ENCODE measurements at regions of chr3 and their contacts with region 1.

Region 1: GRCh38 chr3:114375608-114376421 is 82.0 kb downstream of the TIGIT start:
- DNase-seq: peak; percentile 80
- H3K4me3 ChIP-seq: no peak overlapping the region
- H3K27me3 ChIP-seq: no peaks in the 10 kb centered on the region
- CTCF ChIP-seq: no peak

Region 2: DNA sequence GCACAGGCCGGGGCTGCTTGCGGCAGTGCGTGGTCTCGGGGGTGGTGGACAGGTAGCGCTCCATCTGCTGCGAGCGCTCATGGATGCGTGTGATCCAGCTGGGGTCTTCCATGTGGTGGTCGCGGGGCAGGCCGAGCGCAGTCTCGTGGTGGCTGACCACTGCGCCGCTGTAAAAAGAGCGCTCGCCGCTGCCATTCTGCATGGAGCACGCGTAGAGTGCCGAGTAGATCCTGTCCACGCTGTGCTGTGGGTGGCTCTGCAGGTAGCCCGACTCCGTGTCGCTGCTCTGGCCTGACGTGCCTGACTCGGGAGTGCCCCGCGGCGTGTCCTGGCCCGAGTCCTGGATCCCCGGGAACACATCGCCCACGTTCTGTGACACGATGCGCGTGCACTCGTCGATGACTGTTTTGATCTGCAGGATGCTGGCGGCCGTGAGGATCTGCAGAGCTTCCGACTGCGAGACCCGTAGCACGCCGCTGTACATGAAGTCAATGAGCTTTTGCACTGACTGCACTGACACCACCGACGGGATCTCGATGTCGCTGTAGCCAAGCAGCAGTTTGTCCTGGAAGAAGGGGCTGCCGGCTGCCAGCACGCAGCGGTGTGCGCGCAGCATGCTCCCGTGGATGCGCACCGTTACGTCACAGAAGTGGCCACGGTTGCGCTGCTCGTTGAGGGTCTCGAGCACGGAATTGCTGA is 24.5 kb before region 1 on chr3:
- CTCF ChIA-PET with region 1: no interaction called
- POLR2A ChIA-PET with region 1: no interaction called
- DNase-seq: no peak
- H3K4me3 ChIP-seq: no peak overlapping the region
- H3K27me3 ChIP-seq: no peaks in the 10 kb centered on the region
- CTCF ChIP-seq: no peak

Region 3: DNA sequence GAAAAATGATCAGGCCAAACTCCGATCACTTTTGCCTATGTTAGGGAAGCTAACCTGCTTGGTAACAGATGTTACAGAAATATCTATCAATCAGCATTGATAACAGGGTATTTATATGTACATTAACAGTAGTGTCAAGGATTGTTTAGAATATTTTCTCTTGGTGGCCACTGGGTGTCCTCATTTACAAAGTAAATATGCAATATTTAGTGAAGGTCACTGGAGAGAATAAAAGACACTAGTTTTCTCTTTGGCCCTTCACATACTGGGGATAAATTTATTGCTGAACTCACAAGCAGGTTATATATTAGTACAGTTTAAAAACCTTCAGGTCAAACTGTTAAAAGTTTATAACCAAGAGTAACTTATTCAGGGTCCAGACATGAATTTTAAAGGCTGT is 13.0 kb before region 1 on chr3:
- CTCF ChIA-PET with region 1: interaction called, 12 read pairs
- POLR2A ChIA-PET with region 1: no interaction called
- DNase-seq: no peak
- H3K4me3 ChIP-seq: no peak overlapping the region
- H3K27me3 ChIP-seq: no peaks in the 10 kb centered on the region
- CTCF ChIP-seq: peak; percentile 38; the same call in 1 of the 2 replicates

Measured in BJ (cell line).